ENCODE measurements at regions of chr22 and their contacts with region 1.

Region 1: DNA sequence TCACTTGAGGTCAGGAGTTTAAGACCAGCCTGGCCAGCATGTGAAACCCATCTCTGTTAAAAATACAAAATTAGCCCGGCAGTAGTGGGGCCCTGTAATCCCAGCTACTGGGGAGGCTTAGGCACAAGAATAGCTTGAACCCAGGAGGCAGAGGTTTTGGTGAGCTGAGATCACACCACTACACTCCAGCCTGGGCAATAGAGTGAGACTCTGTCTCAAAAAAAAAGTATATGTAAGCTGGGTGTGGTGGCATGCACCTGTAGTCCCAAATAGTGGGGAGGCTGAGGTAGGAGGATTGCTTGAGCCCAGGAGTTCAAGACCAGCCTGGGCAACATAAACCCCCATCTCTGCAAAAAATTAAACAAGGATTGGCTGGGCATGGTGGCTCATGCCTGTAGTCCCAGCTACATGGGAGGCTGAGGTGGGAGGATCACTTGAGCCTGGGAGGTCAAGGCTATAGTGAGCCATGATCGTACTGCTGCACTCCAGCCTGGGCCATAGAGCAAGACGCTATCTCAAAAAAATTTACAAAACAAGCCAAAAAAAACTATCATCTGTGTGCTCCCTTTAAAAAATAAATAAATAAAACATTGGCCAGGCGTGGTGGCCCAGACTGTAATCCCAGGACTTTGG is 10.8 kb downstream of the CRKL start:
- DNase-seq: no peak
- H3K4me3 Mint-ChIP-seq: no peak overlapping the region
- H3K27ac Mint-ChIP-seq: no peak overlapping the region
- H3K4me1 Mint-ChIP-seq: peaks cover 33% of the 10 kb centered on the region
- H3K27me3 Mint-ChIP-seq: no peaks in the 10 kb centered on the region
- CTCF ChIP-seq: no peak

Region 2: GRCh38 chr22:20761536-20761935 is 166.5 kb before region 1 on chr22:
- CTCF ChIA-PET with region 1: no interaction called
- intact Hi-C with region 1: no loop called
- DNase-seq: no peak
- H3K4me3 Mint-ChIP-seq: no peak overlapping the region
- H3K27ac Mint-ChIP-seq: no peak overlapping the region
- H3K4me1 Mint-ChIP-seq: no peaks in the 10 kb centered on the region
- H3K27me3 Mint-ChIP-seq: no peaks in the 10 kb centered on the region
- CTCF ChIP-seq: no peak

Region 3: DNA sequence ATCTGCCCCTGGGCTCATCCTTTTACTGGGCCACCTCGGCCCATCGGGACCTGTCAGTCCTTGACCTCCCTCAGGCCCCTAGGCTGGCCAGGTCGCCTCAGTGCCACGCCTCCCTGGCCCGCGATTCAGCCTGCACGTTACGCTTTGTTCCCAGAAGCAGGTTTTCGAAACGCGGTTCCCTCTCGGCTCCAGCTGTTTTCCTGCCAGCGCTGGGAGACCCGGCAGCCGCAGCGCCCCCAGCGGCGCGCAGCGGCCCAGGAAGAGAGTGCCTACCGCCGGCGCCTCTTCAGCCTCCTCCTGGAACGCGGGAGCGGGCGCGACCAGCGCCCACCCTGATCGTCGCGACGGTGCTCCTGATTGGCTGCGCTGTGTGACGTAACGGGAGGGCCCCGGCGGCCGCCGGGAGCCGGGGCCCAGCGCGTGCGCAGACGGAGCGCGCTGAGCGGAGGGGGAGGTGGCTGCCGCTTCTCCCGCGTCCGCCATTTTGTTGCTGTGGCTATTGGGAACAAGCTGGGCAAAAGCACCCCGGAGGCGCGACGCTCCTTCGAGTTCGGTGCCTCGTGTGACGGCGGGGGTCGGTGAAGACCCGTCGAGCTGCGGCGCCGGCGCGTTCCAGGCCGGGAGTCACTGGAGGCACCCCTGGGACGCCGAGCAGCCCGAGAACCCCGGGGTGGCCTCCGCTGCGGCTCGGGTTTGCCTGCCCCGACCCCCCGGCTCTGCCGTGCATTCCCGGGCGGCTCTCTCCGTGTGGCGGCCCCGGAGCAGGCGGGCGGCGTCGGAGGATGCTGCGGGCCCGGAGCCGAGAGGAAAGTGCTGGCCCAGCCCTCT is 10.9 kb before region 1 on chr22 and contains the start of gene CRKL:
- CTCF ChIA-PET with region 1: interaction called, 10 read pairs
- intact Hi-C with region 1: no loop called
- DNase-seq: peak; percentile 97
- H3K4me3 Mint-ChIP-seq: peak within 1 kb of the TSS; percentile 76
- H3K27ac Mint-ChIP-seq: peak within 1 kb of the TSS; percentile 81
- H3K4me1 Mint-ChIP-seq: peaks cover 21% of the 10 kb centered on the region
- H3K27me3 Mint-ChIP-seq: no peaks in the 10 kb centered on the region
- CTCF ChIP-seq: peak; percentile 90
- total RNA-seq, gene CRKL: 68.0 and 69.9 TPM in 2 replicates

Region 4: DNA sequence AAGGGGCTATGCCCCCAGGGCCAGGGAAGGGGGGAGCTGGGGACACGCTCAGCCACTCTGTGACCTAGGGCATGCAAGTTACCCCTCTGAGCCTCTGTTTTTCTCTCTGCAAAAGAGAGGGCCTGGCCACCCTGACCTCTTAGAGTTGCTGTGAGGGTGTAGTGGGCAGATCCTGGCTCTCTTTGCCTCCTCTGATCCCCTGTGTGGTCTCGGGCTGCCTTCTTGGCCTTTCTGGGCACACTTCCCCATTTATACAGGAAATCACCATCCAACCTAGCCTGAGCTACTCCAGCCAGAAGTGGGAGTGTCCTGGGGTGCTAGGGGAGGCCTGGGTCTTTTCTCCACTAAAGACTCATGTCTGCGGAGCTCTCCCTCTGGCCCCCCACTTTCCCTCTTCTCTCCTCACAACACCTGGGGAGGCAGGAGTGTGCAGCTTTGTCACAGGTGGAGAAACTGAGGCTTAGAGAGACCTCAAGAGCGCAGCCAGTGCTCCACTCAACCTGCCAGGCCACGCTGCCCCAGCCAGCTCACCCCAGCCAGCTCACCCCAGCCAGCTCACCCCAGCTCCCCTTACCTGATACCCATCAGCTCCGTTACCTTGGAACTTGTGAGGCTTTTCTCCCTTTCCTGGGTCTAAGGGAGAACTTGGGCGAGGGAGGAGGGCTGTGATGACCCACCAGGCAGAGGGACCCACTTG is 40.4 kb after region 1 on chr22:
- CTCF ChIA-PET with region 1: interaction called, 10 read pairs
- intact Hi-C with region 1: no loop called
- DNase-seq: no peak
- H3K4me3 Mint-ChIP-seq: no peak overlapping the region
- H3K27ac Mint-ChIP-seq: no peak overlapping the region
- H3K4me1 Mint-ChIP-seq: no peaks in the 10 kb centered on the region
- H3K27me3 Mint-ChIP-seq: peaks cover under 1% of the 10 kb centered on the region
- CTCF ChIP-seq: no peak